ENCODE measurements at regions of chr13 and their contacts with region 1.

Region 1: DNA sequence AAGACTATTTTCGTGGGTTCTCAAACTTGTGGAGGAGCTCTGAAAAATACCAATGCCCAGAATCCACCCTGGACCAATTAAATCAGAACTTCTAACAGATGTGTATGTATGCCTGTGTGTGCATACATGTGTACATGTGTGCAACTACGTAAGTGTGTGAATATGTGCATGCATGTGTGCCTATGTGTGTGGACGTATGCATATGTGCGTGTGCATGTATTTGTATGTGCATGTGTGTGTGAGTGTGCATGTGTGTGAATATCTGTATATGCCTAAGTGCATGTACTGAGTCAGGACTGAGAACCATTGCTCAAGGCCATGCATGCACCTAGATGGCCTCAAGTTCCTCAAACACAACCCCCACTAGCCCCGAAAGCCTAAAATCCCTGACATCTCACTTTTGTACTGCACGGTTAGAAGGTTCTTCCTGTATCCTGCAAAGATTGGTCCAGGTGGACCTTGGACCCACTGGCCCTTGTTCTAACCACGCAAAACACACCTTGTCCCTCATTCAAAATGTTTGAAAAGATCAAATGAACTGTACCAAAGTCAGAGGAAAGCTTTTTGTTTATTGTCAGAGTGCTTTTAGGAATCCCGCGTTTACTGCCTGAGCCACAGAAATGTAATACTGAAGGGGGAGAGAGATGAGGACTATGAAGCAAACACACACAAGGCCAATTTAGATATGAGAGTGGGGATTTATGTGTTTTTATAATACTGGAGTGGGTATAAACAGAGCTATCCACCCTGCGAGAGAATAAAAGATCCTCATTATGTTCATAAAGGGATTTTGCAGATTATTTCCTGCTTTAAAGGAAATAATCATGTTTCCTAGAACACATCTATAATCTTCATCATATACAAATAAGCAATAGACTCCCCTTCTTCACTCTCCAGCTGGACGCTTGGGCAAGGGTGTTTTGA is 39.1 kb downstream of the LATS2 start:
- DNase-seq: no peak
- H3K4me3 ChIP-seq: no peak overlapping the region
- H3K27me3 ChIP-seq: no peaks in the 10 kb centered on the region
- CTCF ChIP-seq: no peak

Region 2: DNA sequence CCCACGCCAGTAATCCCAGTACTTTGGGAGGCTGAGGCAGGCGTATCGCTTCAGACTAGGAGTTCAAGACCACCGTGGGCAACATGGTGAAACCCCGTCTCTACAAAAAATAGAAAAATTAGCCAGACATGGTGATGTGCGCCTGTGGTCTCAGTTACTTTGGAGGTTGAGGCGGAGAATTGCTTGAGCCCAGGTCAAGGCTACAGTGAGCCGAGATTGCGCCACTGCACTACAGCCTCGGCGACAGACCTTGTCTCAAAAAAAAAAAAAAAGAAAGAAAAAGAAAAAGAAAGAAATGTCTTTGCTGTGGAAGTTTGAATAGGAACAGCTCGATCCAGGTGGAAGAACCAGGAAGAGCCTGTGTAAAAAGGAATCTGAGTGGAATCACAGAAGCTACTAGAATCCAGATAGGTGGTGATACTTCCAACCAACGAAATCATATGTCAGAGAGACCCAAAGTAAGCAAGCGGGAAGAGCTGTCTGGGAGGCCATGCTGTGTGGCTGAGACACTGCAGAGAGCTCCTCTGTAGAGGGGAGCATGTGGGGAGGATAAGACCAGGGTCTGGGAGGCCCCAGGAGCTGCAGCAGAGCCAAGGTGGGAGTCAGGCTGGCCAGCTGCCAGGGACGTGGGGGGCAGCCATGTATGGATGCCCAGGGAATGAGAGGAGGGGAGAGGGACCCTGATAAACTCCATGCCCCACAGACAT is 18.0 kb after region 1 on chr13:
- CTCF ChIA-PET with region 1: no interaction called
- POLR2A ChIA-PET with region 1: interaction called, 27 read pairs
- DNase-seq: no peak
- H3K4me3 ChIP-seq: no peak overlapping the region
- H3K27me3 ChIP-seq: no peaks in the 10 kb centered on the region
- CTCF ChIP-seq: no peak